Heart right ventricle (tissue), 16 donors: ENCODE measurements at regions of chr19 and their contacts with region 1.

Region 1: DNA sequence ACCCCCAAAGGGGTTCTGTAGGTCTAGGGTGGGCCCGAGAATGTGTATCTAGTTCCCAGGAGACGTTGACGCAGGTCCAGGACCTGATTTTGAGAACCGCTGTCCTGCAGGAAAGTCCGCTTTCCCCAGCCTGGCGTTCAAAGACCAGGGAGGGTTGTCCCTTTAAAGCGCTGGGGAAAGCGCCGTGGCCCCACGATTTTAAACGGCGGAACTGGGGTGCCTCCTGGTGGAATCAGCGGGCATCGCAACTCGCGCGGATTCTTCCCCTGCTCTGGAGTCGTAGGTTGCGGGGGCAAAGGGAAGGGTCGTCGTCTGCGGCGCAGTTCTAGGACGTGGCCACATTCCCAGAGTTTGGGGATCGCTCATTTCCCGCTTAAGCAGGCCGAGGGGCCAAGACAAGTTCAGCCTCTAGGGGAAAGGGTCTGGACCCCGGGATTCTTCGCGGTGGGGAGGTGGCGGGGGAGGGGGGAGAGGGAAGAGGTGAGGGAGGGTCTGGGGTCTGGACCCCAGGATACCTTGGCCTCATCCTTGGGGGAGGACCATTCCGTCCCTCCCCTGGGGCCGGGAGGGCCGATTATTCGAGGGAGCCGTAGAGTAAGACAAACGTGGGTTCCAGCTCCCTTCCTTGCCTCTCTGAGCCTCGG is 7.7 kb downstream of the PNMA8B start:
- DNase-seq: peak; percentile 71 to 82
- ATAC-seq: peak; percentile 72 to 86 (median 77)
- H3K4me3 ChIP-seq: peak overlapping the region in 9 of 10 donors; percentile 21 to 50 (median 46)
- H3K27ac ChIP-seq: no peak overlapping the region
- H3K4me1 ChIP-seq: peaks cover 9 to 38% (median 32%) of the 10 kb centered on the region in 9 donors
- H3K27me3 ChIP-seq: peaks cover 3 to 66% (median 58%) of the 10 kb centered on the region in 7 donors
- CTCF ChIP-seq: peak; percentile 80 to 95 (median 90)

Region 2: GRCh38 chr19:46404055-46404752 is 83.7 kb before region 1 on chr19:
- intact Hi-C with region 1: loop called in 9 of 10 experiments (anchors 1 to 5 kb)
- DNase-seq: peak; percentile 29 to 48
- ATAC-seq: peak; percentile 22 to 63 (median 56)
- H3K4me3 ChIP-seq: peak overlapping the region; percentile 16 to 55 (median 42)
- H3K27ac ChIP-seq: peak overlapping the region in 9 of 10 donors; percentile 16 to 75 (median 58)
- H3K4me1 ChIP-seq: peaks cover 5 to 49% (median 24%) of the 10 kb centered on the region in 9 donors
- H3K27me3 ChIP-seq: peaks cover 0 to 77% (median 46%) of the 10 kb centered on the region in 7 donors
- CTCF ChIP-seq: peak in 4 of 9 donors; percentile 18 to 36 (median 27)